ENCODE measurements at regions of chr20 and their contacts with region 1.

Region 1: GRCh38 chr20:47272893-47273590 is 83.5 kb downstream of the ZMYND8 start:
- DNase-seq: peak; percentile 78
- ATAC-seq: peak; percentile 63
- H3K4me3 ChIP-seq: no peak overlapping the region
- H3K27ac ChIP-seq: no peak overlapping the region
- H3K4me1 ChIP-seq: peaks cover 23% of the 10 kb centered on the region
- H3K27me3 ChIP-seq: no peaks in the 10 kb centered on the region
- CTCF ChIP-seq: peak; percentile 91
- EP300 ChIP-seq: no peak
- POLR2A ChIP-seq: no peak
- RAD21 ChIP-seq: peak; percentile 86

Region 2: GRCh38 chr20:47196091-47197081 is 76.7 kb before region 1 on chr20:
- CTCF ChIA-PET with region 1: interaction called, 9 read pairs
- POLR2A ChIA-PET with region 1: no interaction called
- in situ Hi-C with region 1: no loop called
- intact Hi-C with region 1: loop called (anchors 1 kb)
- DNase-seq: peak; percentile 70
- ATAC-seq: peak; percentile 56
- H3K4me3 ChIP-seq: peak overlapping the region; percentile 15 to 64 (median 44); a peak in 5 of 6 replicates
- H3K27ac ChIP-seq: no peak overlapping the region
- H3K4me1 ChIP-seq: peaks cover 41% of the 10 kb centered on the region
- H3K27me3 ChIP-seq: peaks cover 0 to 7% of the 10 kb centered on the region in 2 experiments; a peak in 3 of 5 replicates
- CTCF ChIP-seq: peak; percentile 99
- EP300 ChIP-seq: no peak
- POLR2A ChIP-seq: no peak
- RAD21 ChIP-seq: peak; percentile 99

Region 3: GRCh38 chr20:47231382-47232039 is 41.5 kb before region 1 on chr20:
- CTCF ChIA-PET with region 1: no interaction called
- POLR2A ChIA-PET with region 1: no interaction called
- in situ Hi-C with region 1: no loop called
- intact Hi-C with region 1: loop called (anchors 5 kb)
- DNase-seq: no peak
- ATAC-seq: no peak
- H3K4me3 ChIP-seq: no peak overlapping the region
- H3K27ac ChIP-seq: no peak overlapping the region
- H3K4me1 ChIP-seq: peaks cover 43% of the 10 kb centered on the region
- H3K27me3 ChIP-seq: no peaks in the 10 kb centered on the region
- CTCF ChIP-seq: no peak
- EP300 ChIP-seq: no peak
- POLR2A ChIP-seq: no peak
- RAD21 ChIP-seq: no peak

Region 4: DNA sequence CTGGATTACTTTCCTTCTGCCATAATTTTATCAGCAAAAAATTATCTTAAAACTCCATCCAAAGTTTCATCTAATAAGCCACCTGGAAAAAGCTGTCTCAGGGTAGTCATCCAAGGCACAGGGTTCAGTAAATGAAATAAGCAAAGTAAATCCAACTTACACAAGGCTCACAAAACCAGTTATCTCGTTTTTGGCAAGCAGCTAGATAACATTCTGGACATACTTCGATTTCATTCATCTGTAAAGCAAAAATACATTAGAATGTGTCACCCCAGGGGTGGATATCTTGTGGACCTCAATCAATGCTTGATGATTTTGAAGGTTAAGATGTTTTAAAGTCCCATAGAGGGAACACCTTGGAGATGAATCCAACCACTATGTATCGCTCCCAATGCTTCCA is 10.4 kb after region 1 on chr20:
- CTCF ChIA-PET with region 1: no interaction called
- POLR2A ChIA-PET with region 1: no interaction called
- in situ Hi-C with region 1: no loop called
- intact Hi-C with region 1: no loop called
- DNase-seq: no peak
- ATAC-seq: no peak
- H3K4me3 ChIP-seq: no peak overlapping the region
- H3K27ac ChIP-seq: no peak overlapping the region
- H3K4me1 ChIP-seq: no peaks in the 10 kb centered on the region
- H3K27me3 ChIP-seq: no peaks in the 10 kb centered on the region
- CTCF ChIP-seq: no peak
- EP300 ChIP-seq: no peak
- POLR2A ChIP-seq: no peak
- RAD21 ChIP-seq: no peak

Region 5: DNA sequence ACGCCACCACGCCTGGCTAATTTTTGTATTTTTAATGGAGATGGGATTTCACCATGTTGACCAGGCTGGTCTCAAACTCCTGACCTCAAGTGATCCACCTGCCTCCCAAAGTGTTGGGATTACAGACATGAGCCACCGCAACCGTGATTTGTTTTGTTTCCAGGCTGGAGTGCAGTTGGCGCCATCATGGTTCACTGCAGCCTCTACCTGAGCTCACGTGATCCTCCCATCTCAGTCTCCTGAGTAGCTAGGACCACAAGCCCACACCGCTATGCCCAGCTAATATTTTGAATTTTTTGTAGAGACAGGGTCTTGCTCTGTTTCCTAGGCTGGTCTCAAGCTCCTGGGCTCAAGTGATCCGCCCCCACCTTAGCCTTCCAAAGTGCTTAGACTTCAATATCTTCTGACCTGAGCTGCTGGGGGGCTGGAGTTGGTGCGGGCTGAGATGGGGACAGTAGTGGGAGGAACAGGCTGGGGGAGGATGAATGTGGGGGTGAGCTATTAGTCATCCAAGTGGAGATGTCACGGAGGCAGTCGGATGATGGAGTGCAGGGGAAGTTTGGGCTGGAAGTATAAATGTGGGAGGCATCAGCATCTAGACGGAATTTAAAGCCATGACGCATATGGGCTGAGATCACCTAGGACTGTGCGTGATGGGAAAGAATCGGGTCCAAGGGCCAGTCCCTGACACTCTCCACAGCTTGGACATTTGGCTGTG is 106.5 kb after region 1 on chr20:
- CTCF ChIA-PET with region 1: interaction called, 202 read pairs
- POLR2A ChIA-PET with region 1: interaction called, 20 read pairs
- in situ Hi-C with region 1: loop called (anchors 10 kb)
- intact Hi-C with region 1: loop called (anchors 1 kb)
- DNase-seq: no peak
- ATAC-seq: peak; percentile 9; the same call in 2 of the 3 replicates
- H3K4me3 ChIP-seq: no peak overlapping the region
- H3K27ac ChIP-seq: no peak overlapping the region
- H3K4me1 ChIP-seq: peaks cover 45% of the 10 kb centered on the region
- H3K27me3 ChIP-seq: no peaks in the 10 kb centered on the region
- CTCF ChIP-seq: no peak
- EP300 ChIP-seq: no peak
- POLR2A ChIP-seq: no peak
- RAD21 ChIP-seq: no peak

Region 6: GRCh38 chr20:47392015-47392720 is 119.1 kb after region 1 on chr20:
- CTCF ChIA-PET with region 1: no interaction called
- POLR2A ChIA-PET with region 1: interaction called, 3 read pairs
- in situ Hi-C with region 1: loop called (anchors 10 kb)
- intact Hi-C with region 1: no loop called
- DNase-seq: peak; percentile 71
- ATAC-seq: peak; percentile 53
- H3K4me3 ChIP-seq: no peak overlapping the region
- H3K27ac ChIP-seq: no peak overlapping the region
- H3K4me1 ChIP-seq: peaks cover 38% of the 10 kb centered on the region
- H3K27me3 ChIP-seq: no peaks in the 10 kb centered on the region
- CTCF ChIP-seq: no peak
- EP300 ChIP-seq: peak in 1 of 2 experiments; percentile 18; a peak in 1 of 4 replicates
- POLR2A ChIP-seq: no peak
- RAD21 ChIP-seq: no peak

Measured in HepG2 (cell line).